K562 (cell line): ENCODE measurements at regions of chr2 and their contacts with region 1.

Region 1: DNA sequence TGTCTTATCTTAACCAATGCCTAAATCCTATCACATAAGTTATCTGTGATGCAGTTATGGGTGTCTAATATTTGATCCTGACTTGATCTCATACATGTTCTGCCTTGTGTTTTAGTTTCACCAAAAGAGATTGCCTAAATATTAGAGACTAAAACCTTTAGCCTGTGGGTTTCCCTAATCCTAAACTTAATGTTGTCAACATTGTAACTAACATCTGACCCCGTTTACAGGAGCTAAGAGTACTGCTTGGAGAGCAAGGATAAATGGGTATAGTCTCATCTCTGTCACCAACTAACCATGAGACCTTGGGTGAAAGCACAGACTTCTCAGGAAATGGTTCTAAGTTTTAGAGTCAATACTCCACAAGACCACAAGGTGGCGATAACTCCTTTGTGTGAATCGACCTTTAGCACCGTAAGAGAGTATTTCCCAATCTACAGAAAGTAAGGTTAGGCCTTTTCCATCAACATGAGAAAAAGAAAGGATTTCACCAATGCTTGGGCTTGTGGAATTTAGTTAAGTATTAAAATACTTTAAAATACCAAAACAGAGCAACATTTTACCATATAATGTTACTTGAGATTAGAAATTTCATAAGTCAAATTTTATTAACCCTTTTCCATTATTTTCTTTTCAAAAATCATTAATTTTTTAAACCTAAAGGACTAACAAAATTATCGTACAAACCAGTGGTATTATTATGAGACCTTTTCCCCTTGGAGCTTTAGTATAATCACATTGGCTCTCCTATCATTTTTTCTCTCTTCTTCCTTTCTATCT is 60.5 kb downstream of the G6PC2 start:
- DNase-seq: peak; percentile 65 to 89 (median 72)
- ATAC-seq: peak; percentile 96
- H3K4me3 ChIP-seq: no peak overlapping the region
- H3K27ac ChIP-seq: no peak overlapping the region
- H3K4me1 ChIP-seq: no peaks in the 10 kb centered on the region; a peak in 1 of 5 replicates
- H3K27me3 ChIP-seq: no peaks in the 10 kb centered on the region
- CTCF ChIP-seq: peak; percentile 84 to 95 (median 87)
- EP300 ChIP-seq: peak; percentile 28; the same call in 1 of the 2 replicates
- POLR2A ChIP-seq: no peak
- RAD21 ChIP-seq: peak; percentile 99

Region 2: GRCh38 chr2:169001116-169001815 is 39.6 kb after region 1 on chr2:
- CTCF ChIA-PET with region 1: no interaction called
- POLR2A ChIA-PET with region 1: no interaction called
- in situ Hi-C with region 1: no loop called
- intact Hi-C with region 1: no loop called
- DNase-seq: no peak
- ATAC-seq: no peak
- H3K4me3 ChIP-seq: no peak overlapping the region
- H3K27ac ChIP-seq: no peak overlapping the region
- H3K4me1 ChIP-seq: peaks cover 0 to 25% of the 10 kb centered on the region in 2 experiments; a peak in 4 of 5 replicates
- H3K27me3 ChIP-seq: no peaks in the 10 kb centered on the region
- CTCF ChIP-seq: no peak
- EP300 ChIP-seq: no peak
- POLR2A ChIP-seq: no peak
- RAD21 ChIP-seq: no peak

Region 3: GRCh38 chr2:169034256-169034655 is 72.6 kb after region 1 on chr2:
- CTCF ChIA-PET with region 1: no interaction called
- POLR2A ChIA-PET with region 1: no interaction called
- in situ Hi-C with region 1: no loop called
- intact Hi-C with region 1: loop called (anchors 5 kb)
- DNase-seq: peak in 2 of 4 experiments; percentile 67 to 78
- ATAC-seq: peak; percentile 89
- H3K4me3 ChIP-seq: no peak overlapping the region
- H3K27ac ChIP-seq: peak overlapping the region; percentile 36; the same call in 1 of the 3 replicates
- H3K4me1 ChIP-seq: peaks cover 0 to 29% of the 10 kb centered on the region in 2 experiments; a peak in 4 of 5 replicates
- H3K27me3 ChIP-seq: no peaks in the 10 kb centered on the region
- CTCF ChIP-seq: peak in 2 of 3 experiments; percentile 23 to 37; a peak in 2 of 6 replicates
- EP300 ChIP-seq: peak; percentile 62; the same call in 1 of the 2 replicates
- POLR2A ChIP-seq: no peak
- RAD21 ChIP-seq: peak; percentile 28 to 61; a peak in 2 of 4 replicates

Region 4: GRCh38 chr2:169131587-169132512 is 170.2 kb after region 1 on chr2:
- CTCF ChIA-PET with region 1: interaction called, 4 read pairs
- POLR2A ChIA-PET with region 1: no interaction called
- in situ Hi-C with region 1: no loop called
- intact Hi-C with region 1: loop called (anchors 2 kb)
- DNase-seq: peak; percentile 58 to 76 (median 70)
- ATAC-seq: peak; percentile 14; the same call in 2 of the 3 replicates
- H3K4me3 ChIP-seq: no peak overlapping the region
- H3K27ac ChIP-seq: no peak overlapping the region
- H3K4me1 ChIP-seq: peaks cover 13 to 41% of the 10 kb centered on the region in 2 experiments
- H3K27me3 ChIP-seq: no peaks in the 10 kb centered on the region
- CTCF ChIP-seq: peak; percentile 51 to 83 (median 76); a peak in 5 of 6 replicates
- EP300 ChIP-seq: no peak
- POLR2A ChIP-seq: no peak
- RAD21 ChIP-seq: peak; percentile 59 to 66

Region 5: GRCh38 chr2:169141713-169142352 is 180.2 kb after region 1 on chr2:
- CTCF ChIA-PET with region 1: interaction called, 17 read pairs
- POLR2A ChIA-PET with region 1: no interaction called
- in situ Hi-C with region 1: no loop called
- intact Hi-C with region 1: loop called (anchors 1 kb)
- DNase-seq: peak; percentile 73 to 87 (median 78)
- ATAC-seq: peak; percentile 88
- H3K4me3 ChIP-seq: no peak overlapping the region
- H3K27ac ChIP-seq: no peak overlapping the region
- H3K4me1 ChIP-seq: peaks cover 3 to 12% of the 10 kb centered on the region in 2 experiments; a peak in 3 of 5 replicates
- H3K27me3 ChIP-seq: no peaks in the 10 kb centered on the region
- CTCF ChIP-seq: peak; percentile 86 to 95 (median 88)
- EP300 ChIP-seq: no peak
- POLR2A ChIP-seq: no peak
- RAD21 ChIP-seq: peak; percentile 76 to 87

Region 6: GRCh38 chr2:169221745-169222369 is 260.2 kb after region 1 on chr2:
- CTCF ChIA-PET with region 1: interaction called, 13 read pairs
- POLR2A ChIA-PET with region 1: no interaction called
- in situ Hi-C with region 1: no loop called
- intact Hi-C with region 1: loop called (anchors 1 kb)
- DNase-seq: peak; percentile 24 to 71 (median 42)
- ATAC-seq: peak; percentile 87
- H3K4me3 ChIP-seq: no peak overlapping the region
- H3K27ac ChIP-seq: no peak overlapping the region
- H3K4me1 ChIP-seq: peaks cover 0 to 2% of the 10 kb centered on the region in 2 experiments; a peak in 1 of 5 replicates
- H3K27me3 ChIP-seq: no peaks in the 10 kb centered on the region
- CTCF ChIP-seq: peak; percentile 57 to 84 (median 63); a peak in 5 of 6 replicates
- EP300 ChIP-seq: no peak
- POLR2A ChIP-seq: no peak
- RAD21 ChIP-seq: peak; percentile 93 to 95

Region 7: GRCh38 chr2:169415233-169415748 is 453.7 kb after region 1 on chr2:
- CTCF ChIA-PET with region 1: no interaction called
- POLR2A ChIA-PET with region 1: no interaction called
- in situ Hi-C with region 1: loop called (anchors 25 kb)
- intact Hi-C with region 1: no loop called
- DNase-seq: peak; percentile 40 to 87 (median 54)
- ATAC-seq: peak; percentile 93
- H3K4me3 ChIP-seq: no peak overlapping the region
- H3K27ac ChIP-seq: no peak overlapping the region
- H3K4me1 ChIP-seq: peaks cover 7 to 19% of the 10 kb centered on the region in 2 experiments; a peak in 4 of 5 replicates
- H3K27me3 ChIP-seq: no peaks in the 10 kb centered on the region; a peak in 1 of 5 replicates
- CTCF ChIP-seq: no peak
- EP300 ChIP-seq: peak; percentile 90
- POLR2A ChIP-seq: no peak
- RAD21 ChIP-seq: peak in 1 of 2 experiments; percentile 29; a peak in 1 of 4 replicates